ENCODE measurements at regions of chr4 and their contacts with region 1.

Region 1: DNA sequence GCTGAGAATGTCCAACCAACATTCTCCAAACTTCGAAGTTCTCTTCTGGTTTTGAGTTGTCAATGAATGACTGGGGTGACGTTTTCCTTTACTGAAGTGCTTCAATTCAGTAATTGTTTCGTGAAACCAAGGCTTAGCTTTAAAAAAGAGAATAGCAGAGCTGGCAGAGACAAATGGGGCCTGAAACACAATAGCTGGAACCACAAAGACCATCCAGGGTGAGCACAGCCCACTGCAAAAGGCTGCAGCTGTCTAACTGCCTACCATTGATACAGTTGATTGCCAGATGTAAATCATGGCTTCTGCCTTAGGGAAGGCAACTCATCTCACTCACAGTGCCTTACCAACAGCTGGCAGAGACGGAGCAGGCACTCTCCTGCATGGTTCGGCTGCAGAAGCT is 78.7 kb upstream of the ZNF518B start:
- DNase-seq: no peak
- ATAC-seq: no peak
- H3K4me3 ChIP-seq: no peak overlapping the region
- H3K4me3 Mint-ChIP-seq: no peak overlapping the region
- H3K27ac ChIP-seq: no peak overlapping the region
- H3K27ac Mint-ChIP-seq: no peak overlapping the region
- H3K4me1 ChIP-seq: no peaks in the 10 kb centered on the region
- H3K4me1 Mint-ChIP-seq: no peaks in the 10 kb centered on the region
- H3K27me3 ChIP-seq: no peaks in the 10 kb centered on the region
- H3K27me3 Mint-ChIP-seq: peaks cover 2% of the 10 kb centered on the region
- CTCF ChIP-seq: no peak

Region 2: GRCh38 chr4:9691238-9692065 is 844.5 kb before region 1 on chr4:
- CTCF ChIA-PET with region 1: no interaction called
- POLR2A ChIA-PET with region 1: no interaction called
- intact Hi-C with region 1: loop called in 1 of 2 experiments (anchors 5 kb)
- DNase-seq: peak; percentile 79 to 96 (median 89)
- ATAC-seq: peak; percentile 99
- H3K4me3 ChIP-seq: peak overlapping the region; percentile 72 to 75
- H3K4me3 Mint-ChIP-seq: peak overlapping the region; percentile 88
- H3K27ac ChIP-seq: peak overlapping the region; percentile 55 to 76
- H3K27ac Mint-ChIP-seq: peak overlapping the region; percentile 76
- H3K4me1 ChIP-seq: peaks cover 8% of the 10 kb centered on the region
- H3K4me1 Mint-ChIP-seq: peaks cover 28% of the 10 kb centered on the region
- H3K27me3 ChIP-seq: no peaks in the 10 kb centered on the region
- H3K27me3 Mint-ChIP-seq: no peaks in the 10 kb centered on the region
- CTCF ChIP-seq: no peak

Region 3: GRCh38 chr4:10018818-10019461 is 517.0 kb before region 1 on chr4:
- CTCF ChIA-PET with region 1: interaction called, 3 read pairs
- POLR2A ChIA-PET with region 1: no interaction called
- intact Hi-C with region 1: loop called (anchors 2 to 5 kb)
- DNase-seq: peak; percentile 74 to 96 (median 93)
- ATAC-seq: peak; percentile 99
- H3K4me3 ChIP-seq: peak overlapping the region; percentile 59 to 60
- H3K4me3 Mint-ChIP-seq: peak overlapping the region; percentile 87
- H3K27ac ChIP-seq: peak overlapping the region; percentile 66 to 76
- H3K27ac Mint-ChIP-seq: peak overlapping the region; percentile 95
- H3K4me1 ChIP-seq: peaks cover 11% of the 10 kb centered on the region
- H3K4me1 Mint-ChIP-seq: peaks cover 12% of the 10 kb centered on the region
- H3K27me3 ChIP-seq: peaks cover 0 to 2% of the 10 kb centered on the region in 2 experiments
- H3K27me3 Mint-ChIP-seq: no peaks in the 10 kb centered on the region
- CTCF ChIP-seq: peak; percentile 96

Region 4: GRCh38 chr4:10069075-10069642 is 466.8 kb before region 1 on chr4:
- CTCF ChIA-PET with region 1: no interaction called
- POLR2A ChIA-PET with region 1: no interaction called
- intact Hi-C with region 1: no loop called
- DNase-seq: peak in 1 of 9 experiments; percentile 44
- ATAC-seq: no peak
- H3K4me3 ChIP-seq: no peak overlapping the region
- H3K4me3 Mint-ChIP-seq: no peak overlapping the region
- H3K27ac ChIP-seq: no peak overlapping the region
- H3K27ac Mint-ChIP-seq: peak overlapping the region; percentile 60
- H3K4me1 ChIP-seq: no peaks in the 10 kb centered on the region
- H3K4me1 Mint-ChIP-seq: no peaks in the 10 kb centered on the region
- H3K27me3 ChIP-seq: no peaks in the 10 kb centered on the region
- H3K27me3 Mint-ChIP-seq: no peaks in the 10 kb centered on the region
- CTCF ChIP-seq: no peak

Region 5: DNA sequence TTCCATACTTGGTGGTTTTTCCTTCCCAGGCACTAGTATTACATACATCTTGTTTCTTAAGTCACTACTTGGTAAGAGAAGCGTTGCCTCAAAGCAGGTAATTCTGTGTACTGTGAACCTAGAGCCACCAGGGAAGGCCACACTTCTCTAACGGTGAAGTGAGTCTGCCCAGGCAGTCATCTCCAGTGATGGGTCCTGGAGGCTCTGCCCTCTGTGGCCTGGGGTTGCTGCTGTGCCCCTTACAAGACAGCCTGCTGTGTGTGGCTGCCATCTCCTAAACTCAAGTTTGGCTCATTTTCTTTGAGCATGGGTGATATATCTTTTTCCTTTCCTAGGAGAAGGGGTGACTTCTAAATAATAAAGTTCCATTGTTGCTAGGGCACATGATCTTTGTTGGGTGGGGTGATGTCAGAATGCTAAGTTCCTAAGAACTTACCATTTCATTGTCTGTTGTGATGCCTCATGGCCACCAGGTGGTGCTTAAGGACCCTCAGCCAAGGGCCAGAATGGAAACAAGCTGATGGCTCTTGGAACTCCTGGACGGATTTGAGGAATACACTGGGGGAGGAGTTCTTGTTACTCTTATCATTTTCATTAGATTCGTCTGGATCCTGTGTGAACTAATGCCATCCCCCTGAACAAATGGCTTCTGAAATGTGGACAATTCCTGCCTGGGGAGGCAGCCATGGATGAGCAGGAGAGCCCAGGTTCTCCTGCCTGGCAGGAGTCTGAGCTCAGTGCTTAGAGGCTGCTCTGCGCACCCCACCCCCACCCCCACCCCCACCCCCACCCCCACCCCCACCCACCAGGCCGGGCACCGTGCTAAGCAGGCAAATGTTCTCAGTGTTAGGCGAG is 378.2 kb before region 1 on chr4:
- CTCF ChIA-PET with region 1: interaction called, 89 read pairs
- POLR2A ChIA-PET with region 1: no interaction called
- intact Hi-C with region 1: loop called (anchors 1 kb)
- DNase-seq: peak in 7 of 9 experiments; percentile 14 to 65 (median 27)
- ATAC-seq: peak; percentile 48
- H3K4me3 ChIP-seq: no peak overlapping the region
- H3K4me3 Mint-ChIP-seq: no peak overlapping the region
- H3K27ac ChIP-seq: no peak overlapping the region
- H3K27ac Mint-ChIP-seq: peak overlapping the region; percentile 55
- H3K4me1 ChIP-seq: peaks cover 43% of the 10 kb centered on the region
- H3K4me1 Mint-ChIP-seq: peaks cover 43% of the 10 kb centered on the region
- H3K27me3 ChIP-seq: no peaks in the 10 kb centered on the region
- H3K27me3 Mint-ChIP-seq: no peaks in the 10 kb centered on the region
- CTCF ChIP-seq: peak; percentile 54

Region 6: DNA sequence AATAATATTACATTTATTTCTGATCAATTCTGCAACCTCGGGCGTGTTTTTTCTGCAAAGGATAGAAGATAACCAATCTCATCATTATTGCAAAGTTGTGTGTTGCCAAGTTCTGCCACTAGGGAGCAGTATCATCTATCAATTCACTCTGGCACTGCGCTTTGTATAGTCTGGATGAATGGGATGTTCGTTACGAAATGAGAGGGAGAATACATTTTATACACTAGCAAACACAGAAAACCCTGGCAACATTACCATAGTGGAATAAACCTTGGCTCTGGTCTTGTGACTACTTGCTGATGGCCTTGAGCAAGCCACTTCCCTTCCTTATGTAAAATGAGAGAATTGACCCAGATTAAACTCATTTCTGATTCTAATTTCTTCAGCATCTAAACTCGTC is 18.8 kb after region 1 on chr4:
- CTCF ChIA-PET with region 1: interaction called, 19 read pairs
- POLR2A ChIA-PET with region 1: no interaction called
- intact Hi-C with region 1: no loop called
- DNase-seq: peak in 8 of 9 experiments; percentile 7 to 59 (median 32)
- ATAC-seq: peak; percentile 51
- H3K4me3 ChIP-seq: no peak overlapping the region
- H3K4me3 Mint-ChIP-seq: no peak overlapping the region
- H3K27ac ChIP-seq: no peak overlapping the region
- H3K27ac Mint-ChIP-seq: no peak overlapping the region
- H3K4me1 ChIP-seq: no peaks in the 10 kb centered on the region
- H3K4me1 Mint-ChIP-seq: peaks cover 2% of the 10 kb centered on the region
- H3K27me3 ChIP-seq: no peaks in the 10 kb centered on the region
- H3K27me3 Mint-ChIP-seq: peaks cover 14% of the 10 kb centered on the region
- CTCF ChIP-seq: peak; percentile 92

Region 7: GRCh38 chr4:10629394-10629793 is 93.5 kb after region 1 on chr4:
- CTCF ChIA-PET with region 1: no interaction called
- POLR2A ChIA-PET with region 1: no interaction called
- intact Hi-C with region 1: no loop called
- DNase-seq: peak in 2 of 9 experiments; percentile 7 to 36
- ATAC-seq: no peak
- H3K4me3 ChIP-seq: no peak overlapping the region
- H3K4me3 Mint-ChIP-seq: no peak overlapping the region
- H3K27ac ChIP-seq: no peak overlapping the region
- H3K27ac Mint-ChIP-seq: no peak overlapping the region
- H3K4me1 ChIP-seq: peaks cover 9% of the 10 kb centered on the region
- H3K4me1 Mint-ChIP-seq: peaks cover 15% of the 10 kb centered on the region
- H3K27me3 ChIP-seq: no peaks in the 10 kb centered on the region
- H3K27me3 Mint-ChIP-seq: no peaks in the 10 kb centered on the region
- CTCF ChIP-seq: no peak